ENCODE measurements at regions of chr2 and their contacts with region 1.

Region 1: GRCh38 chr2:209577376-209578357 is 153.8 kb downstream of the MAP2 start:
- DNase-seq: peak; percentile 14
- H3K4me3 ChIP-seq: no peak overlapping the region
- H3K27ac ChIP-seq: no peak overlapping the region
- H3K4me1 ChIP-seq: no peaks in the 10 kb centered on the region
- H3K27me3 ChIP-seq: no peaks in the 10 kb centered on the region
- CTCF ChIP-seq: peak in 1 of 2 donors; percentile 12
- POLR2A ChIP-seq: no peak

Region 2: GRCh38 chr2:208399202-208399601 is 1178.5 kb before region 1 on chr2:
- CTCF ChIA-PET with region 1: no interaction called
- POLR2A ChIA-PET with region 1: no interaction called
- dilution Hi-C with region 1: no loop called
- intact Hi-C with region 1: loop called (anchors 5 kb)
- DNase-seq: no peak
- H3K4me3 ChIP-seq: no peak overlapping the region
- H3K27ac ChIP-seq: no peak overlapping the region
- H3K4me1 ChIP-seq: no peaks in the 10 kb centered on the region
- H3K27me3 ChIP-seq: peaks cover 5 to 8% of the 10 kb centered on the region in 2 experiments
- CTCF ChIP-seq: no peak
- POLR2A ChIP-seq: no peak

Region 3: GRCh38 chr2:209348433-209348832 is 229.2 kb before region 1 on chr2:
- CTCF ChIA-PET with region 1: interaction called, 10 read pairs
- POLR2A ChIA-PET with region 1: no interaction called
- dilution Hi-C with region 1: no loop called
- intact Hi-C with region 1: no loop called
- DNase-seq: no peak
- H3K4me3 ChIP-seq: no peak overlapping the region
- H3K27ac ChIP-seq: no peak overlapping the region
- H3K4me1 ChIP-seq: no peaks in the 10 kb centered on the region
- H3K27me3 ChIP-seq: no peaks in the 10 kb centered on the region
- CTCF ChIP-seq: no peak
- POLR2A ChIP-seq: no peak

Region 4: DNA sequence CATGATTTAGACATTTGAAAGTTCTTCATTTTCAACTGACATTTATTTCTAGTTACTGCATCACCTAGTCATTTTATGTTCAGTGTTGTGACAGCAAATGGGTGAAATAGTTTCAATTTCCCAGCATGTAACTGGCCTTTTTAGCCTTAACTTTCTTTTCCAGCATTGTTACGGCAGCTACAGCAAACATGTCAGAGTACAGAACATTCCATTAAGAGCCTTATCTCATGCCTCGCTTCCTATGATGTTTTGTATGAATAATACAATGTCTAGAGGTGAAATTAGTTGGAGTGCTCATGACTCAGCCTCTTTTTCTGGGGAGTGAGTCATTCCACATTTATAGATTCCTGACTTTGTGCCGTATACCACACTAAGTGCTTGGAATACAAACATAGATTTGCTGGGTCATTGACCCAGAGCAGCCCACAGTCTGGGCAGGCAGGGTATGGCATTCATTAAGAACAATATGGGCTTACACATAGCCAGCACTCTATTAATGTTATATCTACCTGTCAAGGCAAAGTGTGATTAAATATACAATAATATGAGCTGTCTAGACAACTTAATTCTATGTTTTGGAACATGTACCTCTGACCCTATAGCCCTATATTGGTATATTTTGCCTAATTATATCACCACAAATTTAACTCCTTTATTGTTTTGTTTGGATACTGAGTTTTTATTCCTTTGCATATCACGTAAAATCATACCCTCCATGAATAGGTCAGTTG is 81.6 kb before region 1 on chr2:
- CTCF ChIA-PET with region 1: interaction called, 3 read pairs
- POLR2A ChIA-PET with region 1: no interaction called
- dilution Hi-C with region 1: no loop called
- intact Hi-C with region 1: loop called (anchors 1 kb)
- DNase-seq: peak; percentile 99
- H3K4me3 ChIP-seq: peak overlapping the region in 1 of 3 experiments; percentile 52
- H3K27ac ChIP-seq: peak overlapping the region; percentile 100
- H3K4me1 ChIP-seq: peaks cover 30% of the 10 kb centered on the region
- H3K27me3 ChIP-seq: no peaks in the 10 kb centered on the region
- CTCF ChIP-seq: no peak
- POLR2A ChIP-seq: peak; percentile 46

Region 5: GRCh38 chr2:209525834-209526281 is 51.8 kb before region 1 on chr2:
- CTCF ChIA-PET with region 1: interaction called, 11 read pairs
- POLR2A ChIA-PET with region 1: no interaction called
- dilution Hi-C with region 1: no loop called
- intact Hi-C with region 1: no loop called
- DNase-seq: peak; percentile 91
- H3K4me3 ChIP-seq: peak overlapping the region in 1 of 3 experiments; percentile 72
- H3K27ac ChIP-seq: peak overlapping the region; percentile 99
- H3K4me1 ChIP-seq: peaks cover 37% of the 10 kb centered on the region
- H3K27me3 ChIP-seq: no peaks in the 10 kb centered on the region
- CTCF ChIP-seq: no peak
- POLR2A ChIP-seq: no peak

Region 6: DNA sequence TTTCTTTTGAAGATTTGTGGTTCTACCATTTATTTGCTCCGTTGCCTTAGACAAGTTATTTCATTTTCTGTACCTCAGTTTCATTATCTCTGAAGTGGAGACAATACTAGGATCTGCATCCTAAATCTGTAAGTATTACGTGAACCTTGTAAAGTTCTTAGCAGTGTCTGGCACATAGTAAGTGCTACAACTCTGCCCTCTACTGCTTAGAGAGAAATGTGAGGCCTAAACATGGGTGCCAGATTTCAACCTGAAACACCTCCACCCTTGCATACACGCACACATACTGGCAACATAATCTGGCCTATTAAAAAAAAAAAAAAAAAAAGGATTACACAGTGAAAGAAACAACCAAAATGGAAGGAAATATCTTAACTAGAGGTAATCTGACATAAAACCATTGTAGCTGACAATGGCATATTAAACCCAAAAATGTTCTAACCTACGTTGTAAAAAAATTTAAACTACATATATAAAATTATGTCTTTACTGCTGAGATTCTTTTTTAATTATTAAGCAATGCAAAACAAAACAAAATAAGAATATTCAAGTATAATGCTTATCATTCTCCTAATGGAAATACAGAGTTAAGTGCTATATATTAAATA is 21.2 kb before region 1 on chr2:
- CTCF ChIA-PET with region 1: interaction called, 10 read pairs
- POLR2A ChIA-PET with region 1: no interaction called
- dilution Hi-C with region 1: no loop called
- intact Hi-C with region 1: no loop called
- DNase-seq: peak; percentile 70
- H3K4me3 ChIP-seq: no peak overlapping the region
- H3K27ac ChIP-seq: no peak overlapping the region
- H3K4me1 ChIP-seq: no peaks in the 10 kb centered on the region
- H3K27me3 ChIP-seq: no peaks in the 10 kb centered on the region
- CTCF ChIP-seq: peak; percentile 48 to 57
- POLR2A ChIP-seq: no peak

Region 7: GRCh38 chr2:209960676-209961630 is 383.3 kb after region 1 on chr2:
- CTCF ChIA-PET with region 1: interaction called, 7 read pairs
- POLR2A ChIA-PET with region 1: no interaction called
- dilution Hi-C with region 1: no loop called
- intact Hi-C with region 1: loop called (anchors 2 kb)
- DNase-seq: peak; percentile 65
- H3K4me3 ChIP-seq: no peak overlapping the region
- H3K27ac ChIP-seq: no peak overlapping the region
- H3K4me1 ChIP-seq: no peaks in the 10 kb centered on the region
- H3K27me3 ChIP-seq: peaks cover 2 to 8% of the 10 kb centered on the region in 2 experiments
- CTCF ChIP-seq: peak; percentile 57 to 64
- POLR2A ChIP-seq: no peak

Measured in endothelial cell of umbilical vein (primary cell).